MCF 10A (cell line): ENCODE measurements at regions of chr16 and their contacts with region 1.

Region 1: DNA sequence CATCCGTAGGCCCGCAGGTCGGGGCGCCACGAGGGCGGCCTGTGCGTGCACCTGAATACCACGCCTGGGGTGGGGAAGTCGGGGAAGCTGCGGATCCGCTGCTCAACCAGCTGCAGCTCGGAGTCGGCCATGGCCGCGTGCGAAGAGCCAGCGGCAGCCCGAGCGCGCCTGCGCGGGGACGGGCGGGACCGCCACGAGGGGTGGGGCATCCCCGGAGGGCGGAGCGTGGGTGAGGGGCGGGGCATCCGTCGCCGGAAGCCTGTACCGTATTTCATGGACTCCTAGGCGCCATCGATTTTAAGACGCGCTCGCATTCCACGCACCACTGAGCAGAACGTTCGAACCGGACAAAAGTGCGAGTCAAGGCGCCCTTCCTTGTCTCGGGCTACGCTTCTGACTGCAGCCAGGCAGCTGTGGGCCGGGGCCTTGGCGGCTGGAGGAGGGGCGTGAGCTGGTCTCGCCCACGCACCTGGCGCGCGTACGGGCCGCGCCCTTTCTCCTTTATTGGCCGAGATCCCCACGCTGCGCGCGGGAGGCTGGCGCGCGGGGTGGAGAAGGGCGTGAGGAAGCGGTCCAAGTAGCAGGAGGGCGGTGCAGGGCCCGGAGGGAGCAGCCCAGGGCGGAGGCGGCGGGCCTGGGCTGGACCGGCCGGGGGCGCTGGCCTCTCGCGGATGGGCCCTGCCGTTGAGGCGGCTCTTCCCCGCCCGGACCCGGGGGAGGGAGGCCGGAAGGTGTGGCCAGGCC is at the start of gene APRT:
- DNase-seq: peak; percentile 89
- H3K4me3 Mint-ChIP-seq: peak within 1 kb of the TSS; percentile 76
- H3K27ac Mint-ChIP-seq: peak within 1 kb of the TSS; percentile 77
- H3K4me1 Mint-ChIP-seq: peaks cover 5% of the 10 kb centered on the region
- H3K27me3 Mint-ChIP-seq: no peaks in the 10 kb centered on the region
- CTCF ChIP-seq: peak; percentile 18
- total RNA-seq, gene APRT: 231 and 248 TPM in 2 replicates

Region 2: DNA sequence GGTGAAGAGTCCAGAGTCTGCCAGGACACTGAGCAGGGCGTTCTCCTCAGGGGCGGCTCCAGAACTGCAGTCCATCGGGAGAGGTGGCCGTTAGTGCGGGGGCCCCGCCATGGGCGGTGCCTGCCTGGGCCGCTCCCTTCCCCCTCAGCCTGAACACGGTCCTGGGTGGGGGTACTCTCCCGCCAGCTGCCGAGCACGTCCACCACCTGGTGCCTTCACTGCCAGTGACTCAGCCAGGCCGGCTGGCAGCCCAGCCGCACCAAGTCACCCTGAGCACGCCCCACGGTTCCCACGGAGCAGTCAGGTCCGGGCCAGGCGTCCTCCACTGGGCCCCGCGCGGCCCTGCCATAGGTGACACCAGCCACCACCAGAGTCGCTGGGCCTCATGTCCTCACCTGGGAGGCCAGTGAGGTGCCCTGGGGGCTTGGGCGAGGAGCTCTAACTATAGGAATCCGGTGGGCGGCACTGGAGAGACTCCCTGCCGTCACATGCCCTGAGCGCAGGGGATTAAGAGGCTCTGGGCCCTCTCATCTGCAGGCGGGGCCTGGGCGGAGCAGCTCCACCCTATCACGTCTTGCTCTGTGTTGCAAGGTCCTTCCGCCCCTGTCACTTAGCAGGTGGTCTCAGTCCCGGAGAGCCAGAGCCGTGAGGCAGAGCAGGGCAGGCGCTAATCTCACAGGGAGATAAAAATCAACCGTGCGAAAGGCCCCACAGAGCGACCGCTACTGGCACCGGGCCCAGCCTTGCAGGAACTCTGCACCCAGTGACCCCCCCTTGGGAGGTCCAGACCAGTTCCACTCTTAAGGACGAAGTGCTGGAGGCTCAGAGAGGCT is 41.3 kb before region 1 on chr16:
- CTCF ChIA-PET with region 1: no interaction called
- POLR2A ChIA-PET with region 1: interaction called, 12 read pairs
- intact Hi-C with region 1: no loop called
- DNase-seq: peak; percentile 82
- H3K4me3 Mint-ChIP-seq: peak overlapping the region; percentile 57
- H3K27ac Mint-ChIP-seq: peak overlapping the region; percentile 61
- H3K4me1 Mint-ChIP-seq: peaks cover 32% of the 10 kb centered on the region
- H3K27me3 Mint-ChIP-seq: no peaks in the 10 kb centered on the region
- CTCF ChIP-seq: no peak

Region 3: GRCh38 chr16:88826070-88826840 is 14.3 kb after region 1 on chr16:
- CTCF ChIA-PET with region 1: no interaction called
- POLR2A ChIA-PET with region 1: interaction called, 14 read pairs
- intact Hi-C with region 1: no loop called
- DNase-seq: peak; percentile 30
- H3K4me3 Mint-ChIP-seq: peak overlapping the region; percentile 37
- H3K27ac Mint-ChIP-seq: peak overlapping the region; percentile 64
- H3K4me1 Mint-ChIP-seq: peaks cover 14% of the 10 kb centered on the region
- H3K27me3 Mint-ChIP-seq: no peaks in the 10 kb centered on the region
- CTCF ChIP-seq: no peak

Region 4: DNA sequence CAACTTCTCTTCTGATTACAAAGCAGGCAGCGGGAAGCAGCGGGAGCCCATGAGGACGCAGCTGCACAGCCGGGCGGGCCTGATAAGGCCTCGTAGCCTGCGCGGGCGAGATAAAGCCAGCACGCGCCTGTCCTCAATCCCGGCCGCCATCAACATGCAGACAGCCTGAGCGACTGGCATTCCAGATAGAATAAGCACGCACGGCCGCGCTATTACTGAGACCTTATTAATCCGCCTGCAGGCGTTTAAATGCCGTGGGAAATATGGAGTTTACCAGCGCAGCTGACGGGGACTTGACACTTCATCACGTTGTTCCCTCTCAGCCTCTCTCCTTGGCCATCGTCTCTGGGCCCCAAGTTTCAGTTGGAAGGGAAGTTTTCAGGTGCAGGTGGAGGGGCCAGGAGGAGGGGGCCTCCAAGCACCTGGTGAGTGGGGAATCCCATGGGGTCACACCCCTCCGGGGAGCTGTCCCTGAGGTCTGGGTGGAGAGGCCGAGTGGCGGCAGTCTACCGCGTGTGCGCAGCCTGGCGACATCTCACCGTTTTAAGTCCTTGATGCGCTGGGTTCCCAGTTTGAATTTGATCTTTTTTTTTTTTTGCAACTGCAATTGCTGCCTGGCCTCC is 192.4 kb after region 1 on chr16:
- CTCF ChIA-PET with region 1: no interaction called
- POLR2A ChIA-PET with region 1: no interaction called
- intact Hi-C with region 1: no loop called
- DNase-seq: no peak
- H3K4me3 Mint-ChIP-seq: no peak overlapping the region
- H3K27ac Mint-ChIP-seq: no peak overlapping the region
- H3K4me1 Mint-ChIP-seq: no peaks in the 10 kb centered on the region
- H3K27me3 Mint-ChIP-seq: peaks cover 20% of the 10 kb centered on the region
- CTCF ChIP-seq: no peak

Region 5: DNA sequence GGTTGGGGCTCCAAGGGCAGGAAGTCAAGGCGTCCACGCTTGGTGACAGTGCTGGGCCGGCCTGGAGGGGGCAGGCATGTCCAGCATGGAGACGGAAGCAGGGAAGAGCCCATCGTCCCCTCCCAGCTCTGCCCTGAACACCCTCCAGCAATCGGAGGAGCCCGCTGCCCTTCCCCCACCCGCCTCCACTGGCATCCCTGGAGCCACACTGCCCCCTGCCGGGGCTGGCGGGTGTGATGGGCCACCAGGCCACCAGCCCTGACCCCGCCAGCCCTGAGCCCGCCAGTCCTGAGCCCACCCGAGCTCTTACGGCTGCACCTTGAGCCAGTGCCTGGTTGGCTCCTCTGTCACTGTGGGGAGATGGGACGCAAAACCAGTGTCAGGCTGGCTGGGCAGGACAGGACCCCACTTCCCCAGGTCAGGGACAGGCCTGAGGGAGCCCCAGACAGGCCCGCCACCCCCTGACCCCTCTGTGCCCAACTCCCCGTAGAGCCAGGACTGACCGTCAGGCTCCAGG is 355.5 kb after region 1 on chr16:
- CTCF ChIA-PET with region 1: interaction called, 13 read pairs
- POLR2A ChIA-PET with region 1: interaction called, 8 read pairs
- intact Hi-C with region 1: loop called (anchors 1 kb)
- DNase-seq: peak; percentile 77
- H3K4me3 Mint-ChIP-seq: no peak overlapping the region
- H3K27ac Mint-ChIP-seq: no peak overlapping the region
- H3K4me1 Mint-ChIP-seq: peaks cover 12% of the 10 kb centered on the region
- H3K27me3 Mint-ChIP-seq: no peaks in the 10 kb centered on the region
- CTCF ChIP-seq: peak; percentile 92